Posterior vena cava (tissue), 2 donors: ENCODE measurements at regions of chr18 and their contacts with region 1.

Region 1: GRCh38 chr18:57743008-57743407 is 60.1 kb downstream of the ATP8B1 start:
- DNase-seq: no peak

Region 2: GRCh38 chr18:57785751-57786437 is 42.9 kb after region 1 on chr18:
- intact Hi-C with region 1: loop called (anchors 2 kb)
- DNase-seq: no peak